ENCODE measurements at regions of chr2 and their contacts with region 1.

Region 1: DNA sequence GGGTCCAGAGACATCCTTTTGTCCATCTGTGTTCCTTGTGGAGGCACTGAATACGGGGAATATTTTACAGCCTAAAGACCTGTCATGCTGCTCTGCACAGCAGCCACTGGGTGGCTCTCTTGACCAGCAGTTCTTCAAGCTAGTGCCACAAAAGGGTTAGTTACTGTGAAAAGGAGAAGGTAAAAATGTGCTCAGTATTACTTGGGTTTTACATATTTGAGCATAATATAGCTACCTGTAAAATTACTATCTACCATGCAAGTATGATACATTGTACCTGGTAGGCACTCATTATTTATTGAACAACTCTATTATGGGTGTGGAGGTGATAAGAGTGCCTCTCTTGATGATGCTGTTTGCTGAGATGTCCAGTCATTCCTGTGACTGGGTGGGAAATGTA is 23.6 kb downstream of the FZD5 start:
- DNase-seq: peak; percentile 50
- H3K27ac ChIP-seq: no peak overlapping the region
- CTCF ChIP-seq: peak; percentile 85

Region 2: DNA sequence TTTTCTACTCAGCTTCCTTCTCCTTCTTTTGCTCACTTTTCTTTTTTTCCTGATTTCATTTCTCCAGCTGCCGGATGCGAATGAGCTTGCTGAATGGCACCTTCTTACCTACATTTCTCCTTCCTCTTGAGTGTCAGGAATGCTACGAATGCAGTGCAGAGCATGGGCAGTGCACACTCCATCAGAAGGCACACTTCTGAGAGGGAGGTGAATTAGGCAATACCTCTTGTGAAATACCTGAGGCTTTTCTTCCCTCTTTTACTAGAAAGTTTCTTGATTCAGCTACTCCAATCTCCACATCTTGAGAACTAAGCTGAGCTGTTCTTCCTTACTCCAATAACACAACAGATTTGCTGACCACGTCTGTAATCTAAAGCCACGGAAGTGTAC is 228.1 kb after region 1 on chr2:
- CTCF ChIA-PET with region 1: interaction called, 11 read pairs
- POLR2A ChIA-PET with region 1: no interaction called
- DNase-seq: peak; percentile 17
- H3K27ac ChIP-seq: no peak overlapping the region
- CTCF ChIP-seq: no peak

Region 3: GRCh38 chr2:208040199-208041171 is 294.4 kb after region 1 on chr2:
- CTCF ChIA-PET with region 1: interaction called, 32 read pairs
- POLR2A ChIA-PET with region 1: no interaction called
- DNase-seq: peak; percentile 30
- H3K27ac ChIP-seq: no peak overlapping the region
- CTCF ChIP-seq: peak; percentile 66

Region 4: DNA sequence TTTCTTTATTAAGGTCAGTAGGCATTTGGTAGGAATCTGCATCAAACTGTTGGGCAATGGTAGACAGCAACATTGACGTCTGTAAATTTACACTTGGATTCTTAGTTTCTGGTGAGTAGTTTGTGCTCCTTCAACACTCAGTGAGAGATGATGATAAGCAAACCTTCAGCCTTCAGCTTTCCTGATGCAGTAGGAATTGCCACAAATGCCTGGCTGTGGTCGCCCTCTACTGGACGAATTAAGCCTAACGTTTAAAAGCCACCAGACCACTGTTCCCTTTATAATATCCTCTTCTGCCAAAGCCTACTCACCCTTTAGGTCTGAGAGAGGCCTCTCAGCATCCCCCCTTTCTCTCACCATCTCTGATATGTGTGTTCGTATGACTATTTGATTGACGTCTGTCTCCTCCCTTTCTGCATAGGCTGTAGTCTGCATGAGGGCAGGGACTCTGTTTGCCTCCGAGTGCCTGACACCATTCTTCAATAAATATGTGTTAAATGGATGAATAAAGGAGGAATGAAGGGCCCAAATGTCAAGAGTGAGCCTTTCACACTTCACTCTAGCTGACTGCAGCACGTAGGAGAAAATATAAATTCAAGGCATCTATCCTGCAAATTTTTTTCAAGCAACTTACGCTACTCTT is 326.2 kb after region 1 on chr2:
- CTCF ChIA-PET with region 1: interaction called, 12 read pairs
- POLR2A ChIA-PET with region 1: no interaction called
- DNase-seq: peak; percentile 64
- H3K27ac ChIP-seq: no peak overlapping the region
- CTCF ChIP-seq: peak; percentile 85

Region 5: DNA sequence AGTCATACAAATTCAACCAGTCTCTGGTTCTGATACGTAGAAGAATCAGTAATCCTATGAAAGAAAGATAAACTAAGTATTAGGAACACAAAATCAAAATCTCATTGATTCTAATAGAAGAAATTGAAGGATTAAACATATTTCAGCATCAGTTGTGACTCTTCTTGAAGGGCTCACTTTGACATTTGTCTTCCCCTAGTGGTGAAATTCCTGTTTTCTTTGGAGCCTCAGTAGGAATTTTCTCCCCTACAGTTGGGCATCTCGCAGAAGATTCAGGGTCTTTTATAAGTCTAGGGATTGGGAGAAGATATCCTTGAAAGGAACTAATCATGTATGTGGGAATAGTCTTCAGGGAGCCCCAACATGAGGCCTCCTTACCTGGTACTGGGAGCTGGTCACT is 402.7 kb after region 1 on chr2:
- CTCF ChIA-PET with region 1: no interaction called
- POLR2A ChIA-PET with region 1: no interaction called
- DNase-seq: no peak
- H3K27ac ChIP-seq: no peak overlapping the region
- CTCF ChIP-seq: no peak

Measured in RWPE1 (cell line).